Heart right ventricle (tissue), 16 donors: ENCODE measurements at regions of chr16 and their contacts with region 1.

Region 1: DNA sequence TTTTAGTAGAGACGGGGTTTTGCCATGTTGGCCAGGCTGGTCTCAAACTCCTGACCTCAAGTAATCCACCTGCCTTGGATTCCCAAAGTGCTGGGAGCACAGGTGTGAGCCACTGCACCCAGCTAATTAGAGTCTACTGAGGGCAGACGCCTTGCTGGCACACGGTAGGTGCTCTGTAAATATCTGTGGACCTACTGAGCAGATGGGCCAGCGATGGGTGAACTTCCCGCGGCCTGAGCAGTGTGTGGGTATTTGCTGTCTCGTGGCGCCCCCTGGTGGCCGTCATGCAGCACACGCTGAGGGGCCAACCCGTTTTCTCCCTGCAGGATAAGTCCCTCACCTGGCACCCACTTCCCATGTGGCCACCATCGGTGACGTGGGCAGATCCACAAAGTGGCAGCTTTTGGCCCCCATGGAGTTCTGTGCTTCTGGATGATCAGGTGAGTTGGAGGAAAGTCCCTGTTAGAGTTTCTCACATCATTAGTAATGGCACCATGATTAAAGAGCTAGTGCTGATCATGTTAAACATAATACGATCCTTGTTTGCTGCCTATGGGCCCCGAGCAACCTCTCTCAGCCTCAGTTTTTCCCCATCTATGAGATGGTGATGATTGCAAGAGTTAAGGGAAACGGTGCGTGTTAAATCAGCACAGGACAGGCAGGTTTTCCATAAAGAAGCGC is 40.7 kb downstream of the ZDHHC7 start:
- DNase-seq: peak; percentile 75 to 86
- ATAC-seq: peak; percentile 72 to 82 (median 75)
- H3K4me3 ChIP-seq: no peak overlapping the region
- H3K27ac ChIP-seq: no peak overlapping the region
- H3K4me1 ChIP-seq: peaks cover 0 to 17% (median 8%) of the 10 kb centered on the region in 9 donors
- H3K27me3 ChIP-seq: peaks cover 0 to 4% (median 0%) of the 10 kb centered on the region in 7 donors
- CTCF ChIP-seq: peak; percentile 88 to 96 (median 94)

Region 2: GRCh38 chr16:84511180-84511824 is 459.3 kb before region 1 on chr16:
- intact Hi-C with region 1: loop called in 1 of 10 experiments (anchors 10 kb)
- DNase-seq: peak; percentile 83 to 85
- ATAC-seq: peak; percentile 40 to 92 (median 84)
- H3K4me3 ChIP-seq: peak overlapping the region in 2 of 10 donors; percentile 10 to 14
- H3K27ac ChIP-seq: peak overlapping the region in 1 of 10 donors; percentile 87
- H3K4me1 ChIP-seq: peaks cover 0 to 46% (median 3%) of the 10 kb centered on the region in 9 donors
- H3K27me3 ChIP-seq: no peaks in the 10 kb centered on the region
- CTCF ChIP-seq: peak; percentile 94 to 99 (median 97)

Region 3: DNA sequence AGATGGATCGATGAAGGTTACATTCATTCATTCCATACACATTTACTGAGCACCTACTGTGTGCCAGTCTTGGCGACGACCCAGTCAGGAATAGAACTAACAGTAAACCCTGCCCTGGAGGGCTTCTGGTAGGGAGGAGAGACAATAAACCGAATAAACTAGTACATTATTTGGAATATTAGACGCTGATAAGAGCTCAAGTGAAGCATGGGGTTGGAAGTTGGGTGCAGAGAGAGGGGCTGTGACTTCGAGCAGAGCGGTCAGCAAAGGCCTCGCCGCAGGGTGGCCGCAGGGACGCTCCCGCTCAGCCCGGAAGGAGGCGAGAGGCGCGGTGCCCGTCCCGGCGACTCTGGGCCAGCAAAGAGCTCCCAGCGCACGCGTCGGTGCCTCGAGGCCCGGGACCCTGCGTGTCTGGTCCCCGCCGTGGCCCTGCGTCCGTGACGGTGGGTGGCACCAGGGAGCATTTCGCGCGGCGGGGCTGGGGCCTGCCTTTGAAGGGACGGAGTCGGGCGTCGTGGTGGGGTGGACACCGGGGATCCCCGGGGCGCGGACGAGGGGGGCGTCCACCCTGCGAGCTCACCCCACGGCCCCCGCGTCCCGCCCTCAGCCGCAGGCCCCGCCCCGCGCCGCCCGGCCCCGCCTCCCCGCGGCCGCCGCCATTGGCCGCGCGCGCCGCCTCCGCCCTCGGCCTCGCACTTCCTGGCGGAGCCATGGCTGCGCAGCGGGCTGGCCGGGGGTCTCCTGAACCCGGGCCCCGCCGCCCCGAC is 322.6 kb before region 1 on chr16 and contains the start of gene KLHL36:
- intact Hi-C with region 1: loop called in 1 of 10 experiments (anchors 10 kb)
- DNase-seq: peak; percentile 51 to 77
- ATAC-seq: peak; percentile 51 to 89 (median 68)
- H3K4me3 ChIP-seq: peak within 1 kb of the TSS; percentile 55 to 100 (median 81)
- H3K27ac ChIP-seq: peak within 1 kb of the TSS; percentile 88 to 97 (median 92)
- H3K4me1 ChIP-seq: peaks cover 2 to 40% (median 31%) of the 10 kb centered on the region in 9 donors
- H3K27me3 ChIP-seq: no peaks in the 10 kb centered on the region
- CTCF ChIP-seq: peak in 2 of 9 donors; percentile 8 to 22
- total RNA-seq, gene KLHL36: 40.0 to 77.9 (median 58.4) TPM

Region 4: DNA sequence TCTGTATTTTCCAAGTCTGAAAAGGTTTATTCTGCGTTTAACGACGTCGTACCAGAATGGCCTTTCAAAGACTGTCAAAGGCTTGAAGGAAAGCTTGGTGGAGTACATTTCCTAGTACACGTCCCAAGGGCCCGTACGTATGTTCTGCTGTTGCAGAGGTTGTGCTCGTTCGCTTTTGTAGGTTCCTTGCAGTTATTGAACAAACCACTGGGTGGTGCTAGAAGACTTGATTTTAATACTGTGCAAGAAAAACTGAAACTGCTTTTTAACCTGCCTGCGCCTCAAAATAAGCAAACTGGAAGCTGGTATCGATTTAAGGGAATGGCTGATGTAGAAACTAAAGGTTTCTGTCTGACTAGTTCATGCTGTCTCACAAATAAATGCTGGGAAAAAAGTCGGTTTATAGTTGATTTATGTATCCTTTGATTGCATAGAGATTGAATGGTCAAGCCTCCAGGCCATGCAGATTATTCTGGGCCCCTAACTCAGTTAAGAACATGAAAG is 216.2 kb before region 1 on chr16:
- intact Hi-C with region 1: loop called in 9 of 10 experiments (anchors 1 to 5 kb)
- DNase-seq: peak in 1 of 2 donors; percentile 78
- ATAC-seq: peak; percentile 60 to 78 (median 73)
- H3K4me3 ChIP-seq: peak overlapping the region in 1 of 10 donors; percentile 15
- H3K27ac ChIP-seq: peak overlapping the region in 1 of 10 donors; percentile 67
- H3K4me1 ChIP-seq: peaks cover 0 to 78% (median 28%) of the 10 kb centered on the region in 9 donors
- H3K27me3 ChIP-seq: no peaks in the 10 kb centered on the region
- CTCF ChIP-seq: peak; percentile 64 to 92 (median 87)

Region 5: DNA sequence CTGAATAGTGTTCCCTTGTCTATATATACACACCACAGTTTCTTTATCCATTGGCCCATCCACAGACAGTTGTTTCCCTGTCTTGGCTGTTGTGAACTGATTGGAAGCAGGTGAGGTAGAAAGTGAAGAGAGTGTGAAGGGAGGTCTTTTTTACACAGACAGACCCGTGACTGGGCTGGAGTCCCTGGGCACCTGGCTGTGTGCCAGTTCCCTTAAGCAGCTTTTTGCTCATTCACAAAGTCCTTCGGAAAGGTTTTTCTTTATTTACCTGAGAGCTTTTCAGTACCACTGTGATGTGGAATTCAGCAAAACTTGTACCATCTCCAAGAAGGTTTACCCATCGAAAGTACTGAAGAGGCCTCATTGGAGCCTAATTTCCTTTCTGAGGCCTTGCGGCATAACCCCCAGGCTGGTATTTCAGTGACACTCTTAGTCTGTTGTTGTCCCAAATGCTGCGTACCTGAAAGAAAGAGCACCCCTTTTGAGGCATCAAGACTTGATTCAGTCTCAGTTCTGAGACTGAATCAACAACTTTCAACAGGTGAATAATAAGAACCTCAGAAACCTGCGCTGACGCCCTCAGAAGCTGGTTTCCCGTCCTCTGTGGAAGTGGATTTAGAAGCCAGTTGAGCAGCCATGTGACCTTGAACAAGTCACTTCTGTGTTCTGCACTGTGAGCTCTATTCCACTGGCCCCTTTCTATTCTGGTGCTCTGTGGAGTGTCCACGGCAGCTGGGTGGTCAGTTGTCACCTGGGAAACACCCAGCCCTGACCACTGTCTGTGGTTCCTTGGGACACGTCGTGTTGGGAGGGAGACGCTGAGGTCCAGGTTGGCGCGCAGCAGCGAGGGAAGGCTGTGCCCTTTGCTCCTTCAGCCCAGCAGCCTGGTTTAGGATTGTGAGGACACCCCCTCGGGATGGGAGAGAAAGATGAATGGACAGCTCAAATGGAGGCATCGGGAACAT is 204.7 kb before region 1 on chr16:
- intact Hi-C with region 1: loop called in 1 of 10 experiments (anchors 5 kb)
- DNase-seq: no peak
- ATAC-seq: peak in 3 of 8 donors; percentile 17 to 38 (median 34)
- H3K4me3 ChIP-seq: no peak overlapping the region
- H3K27ac ChIP-seq: peak overlapping the region in 1 of 10 donors; percentile 36
- H3K4me1 ChIP-seq: peaks cover 0 to 14% (median 0%) of the 10 kb centered on the region in 9 donors
- H3K27me3 ChIP-seq: no peaks in the 10 kb centered on the region
- CTCF ChIP-seq: no peak

Region 6: GRCh38 chr16:84854759-84855158 is 115.8 kb before region 1 on chr16:
- intact Hi-C with region 1: no loop called
- DNase-seq: no peak
- ATAC-seq: no peak
- H3K4me3 ChIP-seq: no peak overlapping the region
- H3K27ac ChIP-seq: no peak overlapping the region
- H3K4me1 ChIP-seq: no peaks in the 10 kb centered on the region
- H3K27me3 ChIP-seq: no peaks in the 10 kb centered on the region
- CTCF ChIP-seq: no peak

Region 7: GRCh38 chr16:84925092-84925772 is 45.4 kb before region 1 on chr16:
- intact Hi-C with region 1: loop called in 5 of 10 experiments (anchors 2 to 5 kb)
- DNase-seq: peak; percentile 59 to 79
- ATAC-seq: no peak
- H3K4me3 ChIP-seq: no peak overlapping the region
- H3K27ac ChIP-seq: peak overlapping the region in 7 of 10 donors; percentile 25 to 85 (median 76)
- H3K4me1 ChIP-seq: peaks cover 10 to 73% (median 59%) of the 10 kb centered on the region in 9 donors
- H3K27me3 ChIP-seq: no peaks in the 10 kb centered on the region
- CTCF ChIP-seq: peak; percentile 70 to 93 (median 80)